ENCODE measurements at regions of chr3 and their contacts with region 1.

Region 1: DNA sequence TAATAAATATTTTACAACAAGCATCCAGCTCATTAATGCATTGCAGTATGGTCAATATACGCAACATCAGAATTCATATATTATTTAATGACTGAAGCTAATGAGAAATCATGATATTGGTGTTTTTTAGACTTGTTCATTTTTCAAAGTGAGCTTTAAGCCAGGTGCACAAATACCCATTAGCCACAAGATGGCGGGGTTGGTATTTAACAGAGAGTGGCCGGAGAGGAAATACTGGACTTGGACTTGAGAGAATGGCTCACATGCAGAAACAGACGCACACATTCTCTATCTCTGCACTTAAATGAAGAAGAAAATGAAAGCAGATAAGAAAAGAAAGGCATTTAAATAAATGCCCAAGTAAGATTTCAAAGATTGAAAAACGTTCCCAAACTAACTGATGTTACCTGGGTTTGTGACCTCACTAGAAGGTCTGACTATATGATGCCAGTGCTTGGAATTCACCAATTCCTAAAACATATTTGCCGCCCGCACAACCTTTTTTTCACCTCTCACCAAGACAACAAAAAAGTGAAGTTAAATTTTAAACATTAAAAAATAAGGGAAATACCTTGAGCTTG is 21.2 kb upstream of the CRBN start:
- DNase-seq: peak in 4 of 6 donors; percentile 23 to 56 (median 30)
- ATAC-seq: peak; percentile 63 to 95 (median 92)
- H3K4me3 ChIP-seq: no peak overlapping the region
- H3K27ac ChIP-seq: no peak overlapping the region
- H3K4me1 ChIP-seq: no peaks in the 10 kb centered on the region
- H3K27me3 ChIP-seq: no peaks in the 10 kb centered on the region
- CTCF ChIP-seq: peak; percentile 47 to 71 (median 65)

Region 2: GRCh38 chr3:4006288-4006687 is 805.6 kb after region 1 on chr3:
- intact Hi-C with region 1: loop called in 1 of 3 experiments (anchors 10 kb)
- DNase-seq: no peak
- ATAC-seq: peak in 1 of 4 donors; percentile 16
- H3K4me3 ChIP-seq: no peak overlapping the region
- H3K27ac ChIP-seq: no peak overlapping the region
- H3K4me1 ChIP-seq: no peaks in the 10 kb centered on the region
- H3K27me3 ChIP-seq: no peaks in the 10 kb centered on the region
- CTCF ChIP-seq: no peak

Region 3: GRCh38 chr3:4271834-4272233 is 1071.1 kb after region 1 on chr3:
- intact Hi-C with region 1: loop called in 1 of 3 experiments (anchors 5 kb)
- DNase-seq: no peak
- ATAC-seq: peak in 2 of 4 donors; percentile 47 to 74
- H3K4me3 ChIP-seq: no peak overlapping the region
- H3K27ac ChIP-seq: no peak overlapping the region
- H3K4me1 ChIP-seq: no peaks in the 10 kb centered on the region
- H3K27me3 ChIP-seq: no peaks in the 10 kb centered on the region
- CTCF ChIP-seq: peak in 2 of 4 donors; percentile 13 to 19

Region 4: GRCh38 chr3:4284865-4285264 is 1084.1 kb after region 1 on chr3:
- intact Hi-C with region 1: loop called in 2 of 3 experiments (anchors 5 kb)
- DNase-seq: no peak
- ATAC-seq: no peak
- H3K4me3 ChIP-seq: no peak overlapping the region
- H3K27ac ChIP-seq: no peak overlapping the region
- H3K4me1 ChIP-seq: no peaks in the 10 kb centered on the region
- H3K27me3 ChIP-seq: no peaks in the 10 kb centered on the region
- CTCF ChIP-seq: no peak